Heart left ventricle (tissue), 16 donors: ENCODE measurements at regions of chr11 and their contacts with region 1.

Region 1: DNA sequence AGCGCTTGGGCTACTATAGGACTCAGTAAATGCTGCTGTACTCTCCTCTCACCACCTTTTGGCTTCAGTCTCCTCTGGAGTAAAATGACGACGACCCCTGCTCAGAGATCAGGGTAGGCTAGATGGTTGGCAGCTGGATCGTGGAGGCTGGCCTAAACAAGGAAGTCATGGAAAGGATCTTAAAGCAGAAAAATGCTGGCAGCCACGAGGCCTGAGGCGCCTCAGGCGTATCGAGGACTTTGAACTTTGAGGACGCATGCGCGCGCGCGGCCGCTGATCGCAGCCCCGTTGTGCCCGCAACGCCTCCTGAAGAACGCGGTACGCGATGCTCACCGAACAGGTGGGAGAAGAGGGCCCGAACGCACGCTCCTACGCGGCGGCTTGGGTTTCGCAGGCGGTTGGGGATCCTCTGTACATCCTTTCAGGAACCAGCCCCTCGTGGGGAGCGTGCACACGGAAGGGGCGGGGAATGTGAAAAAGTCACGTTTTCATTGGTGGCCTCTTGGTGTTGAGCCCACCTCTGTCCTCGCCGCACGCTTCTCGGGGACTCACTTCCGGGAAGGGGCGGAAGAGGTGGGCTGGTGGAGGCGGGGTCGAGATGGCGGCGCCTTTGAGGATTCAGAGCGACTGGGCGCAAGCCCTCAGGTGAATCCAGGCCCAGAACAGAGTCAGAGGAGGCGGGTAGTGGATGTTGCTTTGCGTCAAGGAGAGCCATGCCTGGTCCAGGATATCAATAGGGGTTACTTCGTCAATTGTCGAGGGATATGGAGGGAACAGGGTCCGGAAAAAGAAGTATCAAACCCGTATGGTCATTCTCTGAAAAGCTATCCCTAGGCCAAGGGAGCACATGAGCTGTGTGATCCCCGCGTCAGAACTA is at the starts of genes COA4 and PAAF1:
- DNase-seq: peak; percentile 93 to 96 (median 95)
- ATAC-seq: peak; percentile 98 to 100 (median 100)
- H3K4me3 ChIP-seq: peak within 1 kb of the TSS; percentile 60 to 100 (median 88)
- H3K27ac ChIP-seq: peak within 1 kb of the TSS; percentile 3 to 92 (median 84)
- H3K4me1 ChIP-seq: peaks cover 0 to 29% (median 19%) of the 10 kb centered on the region in 12 donors
- H3K27me3 ChIP-seq: no peaks in the 10 kb centered on the region
- CTCF ChIP-seq: no peak
- POLR2A ChIP-seq: peak in 1 of 2 donors; percentile 76
- total RNA-seq, gene COA4: 46.0 to 83.4 (median 53.1) TPM
- total RNA-seq, gene PAAF1: 3.9 to 18.4 (median 11.1) TPM

Region 2: GRCh38 chr11:73633999-73634398 is 242.7 kb before region 1 on chr11:
- intact Hi-C with region 1: no loop called
- DNase-seq: no peak
- ATAC-seq: no peak
- H3K4me3 ChIP-seq: no peak overlapping the region
- H3K27ac ChIP-seq: no peak overlapping the region
- H3K4me1 ChIP-seq: no peaks in the 10 kb centered on the region
- H3K27me3 ChIP-seq: no peaks in the 10 kb centered on the region
- CTCF ChIP-seq: no peak
- POLR2A ChIP-seq: no peak

Region 3: DNA sequence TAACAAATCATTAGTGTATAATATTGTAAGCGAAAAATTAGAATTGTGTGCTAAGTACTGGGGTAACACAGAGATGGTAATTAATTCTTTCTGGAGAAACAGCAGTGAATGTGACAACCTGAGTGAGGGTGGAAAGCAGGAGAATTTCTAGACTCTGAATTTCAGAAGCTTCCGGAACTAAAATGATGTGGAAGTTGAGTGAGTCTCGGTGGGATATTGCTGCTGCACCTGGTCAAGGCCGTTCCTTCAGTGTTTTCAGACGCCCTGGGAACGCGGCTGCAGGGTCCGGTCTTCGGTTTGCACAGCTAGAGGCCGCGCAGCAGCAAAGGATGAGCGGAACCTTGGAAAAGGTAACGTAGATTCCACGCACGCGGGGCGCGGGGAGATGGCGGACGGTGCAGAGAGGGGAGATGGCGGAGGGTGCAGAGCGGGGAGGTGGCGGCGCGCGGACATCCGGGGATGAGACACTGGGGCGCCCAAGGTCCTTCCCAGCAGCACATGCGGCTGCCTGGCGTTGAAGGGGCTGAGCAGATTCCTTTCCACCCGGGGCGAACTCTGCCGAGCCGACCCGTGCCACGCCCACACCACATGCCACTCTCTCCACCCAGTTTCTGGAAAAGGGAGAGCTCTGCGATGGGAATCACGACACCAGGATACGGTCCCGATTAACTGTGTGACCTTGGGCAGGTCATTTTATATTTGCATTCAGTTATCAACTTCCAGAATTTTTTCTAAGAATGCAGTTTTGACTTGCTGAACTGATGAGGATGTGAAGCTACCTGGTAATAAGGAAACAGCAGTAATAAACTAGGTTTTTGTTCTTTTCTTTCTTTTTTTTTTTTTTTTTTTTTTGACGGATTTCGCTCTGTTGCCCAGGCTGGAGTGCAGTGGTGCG is 88.8 kb before region 1 on chr11 and contains the start of gene MRPL48:
- intact Hi-C with region 1: loop called in 3 of 10 experiments (anchors 5 to 10 kb)
- DNase-seq: peak; percentile 92 to 96 (median 95)
- ATAC-seq: peak; percentile 98 to 100 (median 99)
- H3K4me3 ChIP-seq: peak within 1 kb of the TSS; percentile 18 to 84 (median 72)
- H3K27ac ChIP-seq: peak within 1 kb of the TSS; percentile 76 to 98 (median 90)
- H3K4me1 ChIP-seq: peaks cover 0 to 21% (median 12%) of the 10 kb centered on the region in 12 donors
- H3K27me3 ChIP-seq: no peaks in the 10 kb centered on the region
- CTCF ChIP-seq: peak in 2 of 12 donors; percentile 2 to 36
- POLR2A ChIP-seq: peak in 1 of 2 donors; percentile 38
- total RNA-seq, gene MRPL48: 21.0 to 43.5 (median 39.4) TPM